ENCODE measurements at regions of chr19 and their contacts with region 1.

Region 1: GRCh38 chr19:2016041-2016807 is 710 bp upstream of the BTBD2 start:
- DNase-seq: peak; percentile 66
- H3K4me3 ChIP-seq: peak overlapping the region in 1 of 3 experiments; percentile 38
- H3K27ac ChIP-seq: no peak overlapping the region
- H3K4me1 ChIP-seq: peaks cover 8% of the 10 kb centered on the region
- H3K27me3 ChIP-seq: no peaks in the 10 kb centered on the region
- CTCF ChIP-seq: no peak

Region 2: GRCh38 chr19:1848399-1849131 is 167.7 kb before region 1 on chr19 and contains the start of gene REXO1:
- CTCF ChIA-PET with region 1: interaction called, 35 read pairs
- dilution Hi-C with region 1: no loop called
- in situ Hi-C with region 1: no loop called
- intact Hi-C with region 1: no loop called
- DNase-seq: peak; percentile 94
- H3K4me3 ChIP-seq: peak within 1 kb of the TSS; percentile 62 to 100 (median 90)
- H3K27ac ChIP-seq: peak within 1 kb of the TSS; percentile 92
- H3K4me1 ChIP-seq: peaks cover 47% of the 10 kb centered on the region
- H3K27me3 ChIP-seq: no peaks in the 10 kb centered on the region
- CTCF ChIP-seq: peak; percentile 84 to 91
- total RNA-seq, gene REXO1: 11.3 to 41.0 TPM

Region 3: DNA sequence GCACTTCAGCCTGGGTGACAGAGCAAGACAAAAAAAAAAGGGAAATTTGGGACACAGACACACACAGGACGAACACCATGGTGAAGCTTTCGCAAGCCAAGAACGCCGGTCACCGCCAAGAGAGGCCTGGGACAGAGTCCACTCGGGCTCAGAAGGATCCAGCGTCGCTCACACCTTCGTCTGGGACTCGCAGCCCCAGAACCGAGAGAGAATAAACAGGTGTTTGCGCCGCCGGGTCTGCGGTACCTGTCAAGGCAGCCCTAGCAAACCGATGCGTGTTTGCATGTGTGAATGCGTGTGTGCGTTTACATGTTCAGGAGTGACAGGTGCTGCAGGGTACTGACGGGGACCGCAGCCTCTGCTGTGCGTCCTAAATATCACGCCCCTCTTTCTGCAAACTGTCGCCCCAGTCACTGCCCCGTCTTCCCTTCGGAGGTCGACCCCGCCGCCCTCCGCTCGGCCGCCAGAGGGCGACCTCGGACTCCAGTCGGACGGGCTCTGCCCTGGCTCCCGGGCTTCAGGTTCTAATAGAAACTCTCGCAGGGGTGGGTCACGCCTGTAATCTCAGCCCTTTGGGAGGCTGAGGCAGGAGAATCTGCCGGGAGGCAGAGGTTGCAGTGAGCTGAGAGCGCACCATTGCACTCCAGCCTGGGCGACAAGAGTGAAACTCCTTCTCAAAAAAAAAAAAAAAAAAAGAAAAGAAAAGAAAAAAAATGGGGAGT is 87.0 kb before region 1 on chr19:
- CTCF ChIA-PET with region 1: no interaction called
- dilution Hi-C with region 1: no loop called
- in situ Hi-C with region 1: no loop called
- intact Hi-C with region 1: loop called (anchors 2 kb)
- DNase-seq: peak; percentile 58
- H3K4me3 ChIP-seq: peak overlapping the region; percentile 16 to 43 (median 35)
- H3K27ac ChIP-seq: no peak overlapping the region
- H3K4me1 ChIP-seq: peaks cover 6% of the 10 kb centered on the region
- H3K27me3 ChIP-seq: no peaks in the 10 kb centered on the region
- CTCF ChIP-seq: peak; percentile 76 to 84

Region 4: DNA sequence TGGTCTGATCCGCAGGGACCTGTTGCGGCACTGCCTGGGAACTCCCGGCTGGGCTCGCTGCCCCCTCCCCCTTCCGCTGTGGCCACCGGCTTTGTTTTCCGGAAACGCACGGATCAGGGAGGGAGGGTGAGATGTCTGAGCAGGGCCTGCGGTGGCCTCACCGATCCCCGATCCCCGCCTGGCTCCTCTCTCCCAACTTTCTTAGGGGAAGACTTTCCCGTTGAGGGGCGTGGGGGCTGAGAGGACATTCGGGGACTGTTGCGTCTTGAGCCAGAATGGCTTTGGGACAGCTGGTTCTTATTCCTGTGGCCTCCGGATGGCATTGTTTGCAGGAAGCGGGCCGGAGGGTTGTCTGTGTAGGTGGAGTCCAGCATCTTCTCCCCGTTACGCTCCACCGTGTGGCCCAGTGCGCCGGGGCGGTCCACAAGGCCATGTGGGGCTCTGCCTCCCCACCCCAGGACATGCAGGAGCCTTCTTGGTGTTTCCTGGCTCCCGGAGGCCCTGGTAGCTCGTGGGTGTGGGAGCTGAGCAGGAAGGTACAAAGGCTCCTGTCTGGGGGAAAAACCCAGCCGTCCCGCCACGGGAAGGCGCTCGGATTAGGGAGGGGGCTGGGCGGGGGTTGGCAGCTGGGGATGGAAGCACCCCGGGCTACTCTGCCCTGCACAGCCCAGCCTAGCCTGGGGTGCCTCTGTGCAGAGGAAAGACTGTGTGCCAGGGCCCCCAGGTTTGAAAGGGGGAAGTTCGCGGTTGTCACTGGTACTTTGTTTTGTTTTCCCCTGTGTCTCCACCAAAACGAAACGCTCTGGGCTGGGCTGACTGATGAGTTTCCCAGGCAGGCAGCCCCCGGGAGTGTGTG is 73.9 kb before region 1 on chr19:
- CTCF ChIA-PET with region 1: no interaction called
- dilution Hi-C with region 1: no loop called
- in situ Hi-C with region 1: no loop called
- intact Hi-C with region 1: loop called (anchors 2 kb)
- DNase-seq: peak; percentile 77
- H3K4me3 ChIP-seq: peak overlapping the region; percentile 60 to 91 (median 86)
- H3K27ac ChIP-seq: peak overlapping the region; percentile 59
- H3K4me1 ChIP-seq: peaks cover 36% of the 10 kb centered on the region
- H3K27me3 ChIP-seq: no peaks in the 10 kb centered on the region
- CTCF ChIP-seq: no peak

Region 5: DNA sequence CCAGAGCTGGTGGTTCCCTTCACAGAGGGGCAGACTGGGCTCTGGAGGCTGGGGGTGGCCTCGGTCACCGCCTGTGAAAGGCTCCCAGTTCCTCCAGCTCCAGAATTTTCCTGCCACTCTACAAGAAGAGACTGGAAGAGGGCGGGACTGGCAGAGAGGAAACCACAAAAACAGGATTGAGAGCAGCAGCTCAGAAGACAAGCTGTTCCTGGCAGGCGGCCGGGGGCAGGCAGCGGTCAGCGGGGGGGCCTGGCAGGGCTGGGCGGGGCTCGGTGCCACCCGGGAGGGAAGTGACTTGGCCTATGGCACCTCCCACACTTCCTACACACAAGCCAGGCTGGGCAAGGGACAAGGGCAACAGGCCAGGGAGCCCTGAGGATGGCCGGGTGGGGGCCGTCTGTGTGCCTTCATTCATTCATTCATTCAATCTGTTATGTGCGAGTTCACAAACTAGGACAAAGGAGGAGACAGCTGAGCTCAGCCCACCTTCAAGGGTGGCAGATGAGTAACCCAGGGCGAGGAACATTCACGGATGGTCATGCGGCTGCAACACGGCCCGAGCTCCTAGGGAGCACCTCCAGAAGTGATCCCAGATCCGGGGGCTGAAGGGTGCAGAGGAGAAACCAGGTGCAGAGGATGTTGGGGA is 16.2 kb after region 1 on chr19:
- CTCF ChIA-PET with region 1: no interaction called
- dilution Hi-C with region 1: no loop called
- in situ Hi-C with region 1: no loop called
- intact Hi-C with region 1: loop called (anchors 2 kb)
- DNase-seq: peak; percentile 95
- H3K4me3 ChIP-seq: peak overlapping the region in 2 of 3 experiments; percentile 19 to 39
- H3K27ac ChIP-seq: peak overlapping the region; percentile 80
- H3K4me1 ChIP-seq: peaks cover 31% of the 10 kb centered on the region
- H3K27me3 ChIP-seq: no peaks in the 10 kb centered on the region
- CTCF ChIP-seq: no peak

Region 6: GRCh38 chr19:2096480-2097329 is 80.5 kb after region 1 on chr19 and contains the start of gene IZUMO4:
- CTCF ChIA-PET with region 1: interaction called, 4 read pairs
- dilution Hi-C with region 1: no loop called
- in situ Hi-C with region 1: no loop called
- intact Hi-C with region 1: loop called (anchors 1 kb)
- DNase-seq: peak; percentile 95
- H3K4me3 ChIP-seq: peak within 1 kb of the TSS; percentile 85 to 96 (median 86)
- H3K27ac ChIP-seq: peak within 1 kb of the TSS; percentile 82
- H3K4me1 ChIP-seq: peaks cover 37% of the 10 kb centered on the region
- H3K27me3 ChIP-seq: no peaks in the 10 kb centered on the region
- CTCF ChIP-seq: peak; percentile 13 to 55
- total RNA-seq, gene IZUMO4: 1.2 to 11.2 TPM

Measured in mammary epithelial cell (primary cell).